ENCODE measurements at regions of chr20 and their contacts with region 1.

Region 1: GRCh38 chr20:47878040-47878439 is 92.8 kb upstream of the SULF2 start:
- DNase-seq: no peak
- H3K4me3 ChIP-seq: no peak overlapping the region
- H3K27ac ChIP-seq: peak overlapping the region; percentile 84
- H3K4me1 ChIP-seq: peaks cover 47% of the 10 kb centered on the region
- H3K27me3 ChIP-seq: no peaks in the 10 kb centered on the region
- CTCF ChIP-seq: peak in 1 of 2 donors; percentile 33
- POLR2A ChIP-seq: no peak

Region 2: GRCh38 chr20:47950073-47950913 is 72.3 kb after region 1 on chr20:
- CTCF ChIA-PET with region 1: no interaction called
- POLR2A ChIA-PET with region 1: no interaction called
- dilution Hi-C with region 1: no loop called
- intact Hi-C with region 1: loop called (anchors 1 kb)
- DNase-seq: peak; percentile 77
- H3K4me3 ChIP-seq: no peak overlapping the region
- H3K27ac ChIP-seq: peak overlapping the region; percentile 69
- H3K4me1 ChIP-seq: peaks cover 26% of the 10 kb centered on the region
- H3K27me3 ChIP-seq: no peaks in the 10 kb centered on the region
- CTCF ChIP-seq: no peak
- POLR2A ChIP-seq: no peak

Region 3: DNA sequence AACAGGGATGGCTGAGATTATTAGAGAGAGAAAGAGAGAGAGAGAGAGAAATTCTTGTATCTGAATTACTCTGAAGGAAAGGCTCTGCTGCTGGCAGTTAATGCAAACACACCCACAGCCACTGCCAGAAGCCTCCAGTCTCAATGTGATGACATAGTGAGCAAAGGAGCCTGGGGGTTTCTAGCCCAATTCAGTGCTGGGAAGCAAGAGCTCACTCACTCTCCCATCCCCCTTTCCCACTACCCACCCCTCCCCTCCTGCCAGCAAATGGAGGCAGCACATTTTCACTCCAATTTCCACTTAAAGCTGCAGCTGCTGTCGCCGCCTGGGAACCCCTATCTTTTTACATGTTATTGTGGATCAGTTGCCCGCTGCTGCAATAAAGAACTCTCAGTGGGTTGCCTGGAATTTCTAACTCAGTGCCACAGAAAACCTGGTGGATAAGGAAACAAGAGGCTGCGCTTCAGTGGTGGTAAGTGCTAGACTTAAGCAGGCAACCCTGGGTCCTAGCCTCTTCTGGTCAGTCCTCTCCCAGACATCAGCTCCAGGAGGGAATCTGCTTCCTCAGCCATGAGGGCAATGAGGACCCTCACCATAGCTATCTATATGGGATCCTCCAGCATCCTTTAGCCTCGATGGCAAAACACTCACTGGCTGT is 397.8 kb after region 1 on chr20:
- CTCF ChIA-PET with region 1: no interaction called
- POLR2A ChIA-PET with region 1: no interaction called
- dilution Hi-C with region 1: no loop called
- intact Hi-C with region 1: loop called (anchors 1 kb)
- DNase-seq: no peak
- H3K4me3 ChIP-seq: no peak overlapping the region
- H3K27ac ChIP-seq: no peak overlapping the region
- H3K4me1 ChIP-seq: peaks cover 19% of the 10 kb centered on the region
- H3K27me3 ChIP-seq: peaks cover 0 to 5% of the 10 kb centered on the region in 2 experiments
- CTCF ChIP-seq: no peak
- POLR2A ChIP-seq: no peak

Measured in endothelial cell of umbilical vein (primary cell).